ENCODE measurements at regions of chr10 and their contacts with region 1.

Region 1: DNA sequence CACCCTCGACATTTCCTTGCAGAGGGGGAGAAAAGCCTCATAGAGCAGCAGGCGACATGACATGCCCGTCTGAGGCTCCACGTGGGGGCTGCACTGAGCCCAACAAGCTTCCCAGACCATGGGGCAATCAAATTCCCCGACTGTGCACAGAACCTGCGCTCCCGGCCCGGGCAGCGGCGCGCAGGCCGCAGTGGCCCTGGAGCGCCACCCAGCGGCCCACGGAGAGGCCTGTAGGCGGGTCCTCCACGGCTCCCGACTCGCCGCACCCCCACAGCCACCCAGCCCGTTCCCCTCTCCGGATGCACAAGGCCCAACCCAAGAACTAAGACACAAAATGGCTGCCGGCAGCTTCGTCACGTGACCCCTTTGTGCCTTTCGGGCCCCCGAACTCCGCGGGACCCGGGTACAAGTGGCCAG is 816 bp downstream of the EPC1 start:
- DNase-seq: peak; percentile 91 to 98 (median 94)
- ATAC-seq: peak; percentile 81
- H3K4me3 ChIP-seq: peak overlapping the region; percentile 82 to 90
- H3K4me3 Mint-ChIP-seq: peak overlapping the region; percentile 97
- H3K27ac ChIP-seq: peak overlapping the region; percentile 98
- H3K27ac Mint-ChIP-seq: peak overlapping the region; percentile 100
- H3K4me1 ChIP-seq: peaks cover 47% of the 10 kb centered on the region
- H3K4me1 Mint-ChIP-seq: peaks cover 69% of the 10 kb centered on the region
- H3K27me3 ChIP-seq: no peaks in the 10 kb centered on the region
- H3K27me3 Mint-ChIP-seq: no peaks in the 10 kb centered on the region
- CTCF ChIP-seq: peak; percentile 83

Region 2: GRCh38 chr10:32055813-32056600 is 290.1 kb before region 1 on chr10 and contains the start of gene KIF5B:
- CTCF ChIA-PET with region 1: no interaction called
- POLR2A ChIA-PET with region 1: interaction called, 5 read pairs
- intact Hi-C with region 1: loop called (anchors 2 to 10 kb)
- DNase-seq: peak; percentile 69 to 93 (median 84)
- ATAC-seq: peak; percentile 79
- H3K4me3 ChIP-seq: peak within 1 kb of the TSS; percentile 74 to 89
- H3K4me3 Mint-ChIP-seq: peak within 1 kb of the TSS; percentile 96
- H3K27ac ChIP-seq: peak within 1 kb of the TSS; percentile 66 to 89
- H3K27ac Mint-ChIP-seq: peak within 1 kb of the TSS; percentile 94
- H3K4me1 ChIP-seq: peaks cover 41% of the 10 kb centered on the region
- H3K4me1 Mint-ChIP-seq: peaks cover 51% of the 10 kb centered on the region
- H3K27me3 ChIP-seq: no peaks in the 10 kb centered on the region
- H3K27me3 Mint-ChIP-seq: no peaks in the 10 kb centered on the region
- CTCF ChIP-seq: no peak
- total RNA-seq, gene KIF5B: 53.2 to 53.8 TPM

Region 3: GRCh38 chr10:32271617-32272016 is 74.5 kb before region 1 on chr10:
- CTCF ChIA-PET with region 1: interaction called, 4 read pairs
- POLR2A ChIA-PET with region 1: interaction called, 3 read pairs
- intact Hi-C with region 1: loop called in 1 of 2 experiments (anchors 5 kb)
- DNase-seq: no peak
- ATAC-seq: no peak
- H3K4me3 ChIP-seq: no peak overlapping the region
- H3K4me3 Mint-ChIP-seq: no peak overlapping the region
- H3K27ac ChIP-seq: no peak overlapping the region
- H3K27ac Mint-ChIP-seq: no peak overlapping the region
- H3K4me1 ChIP-seq: no peaks in the 10 kb centered on the region
- H3K4me1 Mint-ChIP-seq: peaks cover 5% of the 10 kb centered on the region
- H3K27me3 ChIP-seq: no peaks in the 10 kb centered on the region
- H3K27me3 Mint-ChIP-seq: no peaks in the 10 kb centered on the region
- CTCF ChIP-seq: no peak

Region 4: DNA sequence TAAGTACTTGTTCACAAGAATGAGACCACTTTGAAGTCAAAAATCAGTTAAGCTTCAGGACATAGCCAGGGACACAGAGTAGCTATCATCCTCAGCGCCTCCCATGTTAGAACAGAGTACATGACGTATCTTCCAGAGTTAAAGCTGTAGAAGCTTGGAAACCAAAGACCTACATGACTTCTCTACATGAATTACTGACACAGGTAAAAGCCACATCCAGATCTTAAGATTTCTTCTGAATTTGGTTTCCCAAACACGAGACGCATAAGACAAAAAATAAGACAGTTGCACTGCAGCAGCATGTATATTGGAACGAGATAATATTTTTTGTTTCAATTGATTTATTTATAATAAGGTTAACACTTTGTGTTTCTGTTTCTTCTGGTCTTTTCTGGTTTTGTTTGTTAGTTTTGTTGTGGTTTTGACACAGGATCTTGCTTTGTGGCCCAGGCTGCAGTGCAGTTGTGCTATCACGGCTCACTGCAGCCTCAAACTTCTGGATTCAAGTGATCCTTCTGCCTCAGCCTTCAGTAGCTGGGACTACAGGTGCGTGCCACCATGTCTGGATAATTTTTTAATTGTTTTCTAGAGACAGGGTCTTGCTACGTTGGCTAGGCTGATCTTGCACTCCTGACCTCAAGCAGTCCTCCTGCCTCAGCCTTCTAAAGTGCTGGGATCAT is 11.1 kb after region 1 on chr10:
- CTCF ChIA-PET with region 1: interaction called, 8 read pairs
- POLR2A ChIA-PET with region 1: interaction called, 6 read pairs
- intact Hi-C with region 1: loop called (anchors 1 kb)
- DNase-seq: peak in 3 of 9 experiments; percentile 37 to 73 (median 61)
- ATAC-seq: peak; percentile 86
- H3K4me3 ChIP-seq: no peak overlapping the region
- H3K4me3 Mint-ChIP-seq: peak overlapping the region; percentile 53
- H3K27ac ChIP-seq: peak overlapping the region in 1 of 2 experiments; percentile 47
- H3K27ac Mint-ChIP-seq: peak overlapping the region; percentile 87
- H3K4me1 ChIP-seq: peaks cover 47% of the 10 kb centered on the region
- H3K4me1 Mint-ChIP-seq: peaks cover 77% of the 10 kb centered on the region
- H3K27me3 ChIP-seq: no peaks in the 10 kb centered on the region
- H3K27me3 Mint-ChIP-seq: no peaks in the 10 kb centered on the region
- CTCF ChIP-seq: no peak

Region 5: DNA sequence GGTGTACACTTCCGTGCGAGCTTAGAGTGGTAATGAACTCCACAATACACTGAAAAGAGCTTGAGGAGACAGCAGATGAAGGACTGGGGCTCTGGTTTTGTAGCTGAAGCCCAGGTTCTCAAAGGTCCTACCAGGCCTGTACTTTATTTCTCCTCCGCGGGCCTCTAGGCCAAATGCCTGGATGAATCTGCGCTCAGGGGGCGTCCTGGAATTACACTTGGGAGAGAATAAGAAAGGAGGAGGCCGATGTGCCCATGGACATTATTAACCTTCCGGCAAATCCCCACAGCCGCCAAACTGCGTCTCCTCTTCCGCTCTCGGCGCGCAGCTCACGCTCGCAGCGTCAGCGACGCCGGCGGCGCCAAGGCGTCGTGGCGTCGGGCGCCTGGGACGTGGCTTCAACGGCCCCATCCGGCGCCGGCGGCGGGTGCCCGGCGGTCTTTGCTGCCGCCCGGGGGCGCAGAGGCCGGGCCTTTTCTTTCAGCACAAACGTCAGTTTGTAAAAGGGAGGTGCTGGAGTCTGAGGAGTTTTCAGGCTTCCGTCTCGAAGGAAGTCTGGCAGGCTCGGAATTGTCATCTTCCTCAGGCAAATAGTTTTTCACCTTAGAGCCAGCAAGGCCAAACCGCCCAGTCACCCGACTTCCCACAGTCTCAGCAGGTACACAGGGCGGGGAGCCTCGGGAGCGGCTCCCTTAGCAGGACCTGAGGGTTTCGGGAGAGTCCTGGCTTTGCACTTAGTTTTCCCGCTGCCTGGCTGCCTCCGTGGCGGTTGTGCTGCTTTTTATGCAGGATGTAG is 99.8 kb after region 1 on chr10 and contains the start of gene CCDC7:
- CTCF ChIA-PET with region 1: no interaction called
- POLR2A ChIA-PET with region 1: interaction called, 7 read pairs
- intact Hi-C with region 1: loop called in 1 of 2 experiments (anchors 1 kb)
- DNase-seq: peak; percentile 73 to 96 (median 83)
- ATAC-seq: peak; percentile 95
- H3K4me3 ChIP-seq: peak within 1 kb of the TSS; percentile 68 to 99
- H3K4me3 Mint-ChIP-seq: peak within 1 kb of the TSS; percentile 94
- H3K27ac ChIP-seq: peak within 1 kb of the TSS; percentile 91 to 98
- H3K27ac Mint-ChIP-seq: peak within 1 kb of the TSS; percentile 100
- H3K4me1 ChIP-seq: peaks cover 4% of the 10 kb centered on the region
- H3K4me1 Mint-ChIP-seq: peaks cover 28% of the 10 kb centered on the region
- H3K27me3 ChIP-seq: no peaks in the 10 kb centered on the region
- H3K27me3 Mint-ChIP-seq: no peaks in the 10 kb centered on the region
- CTCF ChIP-seq: peak; percentile 45
- total RNA-seq, gene CCDC7: 50.1 to 59.0 TPM

Region 6: DNA sequence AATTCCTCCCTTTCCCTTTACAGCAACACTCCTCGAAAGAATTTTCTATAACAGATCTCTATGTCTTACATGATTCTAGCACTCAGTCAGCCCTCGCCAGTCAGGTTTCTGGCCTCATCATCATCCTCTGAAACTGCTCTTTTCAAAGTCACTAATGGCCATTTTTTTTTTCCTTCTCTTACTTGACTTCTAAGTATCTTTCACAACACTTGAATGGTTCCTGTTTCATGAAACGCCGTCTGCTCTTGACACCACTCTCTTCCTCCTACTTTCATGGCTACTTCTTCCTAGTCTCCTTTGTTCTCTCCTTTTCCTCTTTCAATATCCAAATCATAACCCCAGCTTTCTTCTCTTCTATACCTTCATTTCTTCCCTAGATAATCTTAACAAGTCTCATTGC is 1088.8 kb after region 1 on chr10:
- CTCF ChIA-PET with region 1: no interaction called
- POLR2A ChIA-PET with region 1: no interaction called
- intact Hi-C with region 1: no loop called
- DNase-seq: no peak
- ATAC-seq: no peak
- H3K4me3 ChIP-seq: no peak overlapping the region
- H3K4me3 Mint-ChIP-seq: no peak overlapping the region
- H3K27ac ChIP-seq: no peak overlapping the region
- H3K27ac Mint-ChIP-seq: no peak overlapping the region
- H3K4me1 ChIP-seq: no peaks in the 10 kb centered on the region
- H3K4me1 Mint-ChIP-seq: no peaks in the 10 kb centered on the region
- H3K27me3 ChIP-seq: peaks cover 0 to 2% of the 10 kb centered on the region in 2 experiments
- H3K27me3 Mint-ChIP-seq: peaks cover 7% of the 10 kb centered on the region
- CTCF ChIP-seq: no peak